ENCODE measurements at regions of chr12 and their contacts with region 1.

Region 1: GRCh38 chr12:105053116-105053572 is 31.1 kb downstream of the ALDH1L2 start:
- DNase-seq: peak; percentile 79
- ATAC-seq: peak; percentile 96
- H3K4me3 ChIP-seq: no peak overlapping the region
- H3K27ac ChIP-seq: no peak overlapping the region
- H3K4me1 ChIP-seq: peaks cover 8% of the 10 kb centered on the region
- H3K27me3 ChIP-seq: no peaks in the 10 kb centered on the region
- CTCF ChIP-seq: peak; percentile 78 to 96 (median 94)
- EP300 ChIP-seq: no peak
- POLR2A ChIP-seq: no peak
- RAD21 ChIP-seq: peak; percentile 99

Region 2: GRCh38 chr12:104201238-104202001 is 851.7 kb before region 1 on chr12:
- CTCF ChIA-PET with region 1: interaction called, 6 read pairs
- POLR2A ChIA-PET with region 1: no interaction called
- RAD21 ChIA-PET with region 1: interaction called, 8 read pairs
- SMC1A ChIA-PET with region 1: interaction called, 3 read pairs
- in situ Hi-C with region 1: no loop called
- intact Hi-C with region 1: loop called (anchors 5 kb)
- DNase-seq: peak; percentile 35
- ATAC-seq: peak; percentile 90
- H3K4me3 ChIP-seq: no peak overlapping the region
- H3K27ac ChIP-seq: no peak overlapping the region
- H3K4me1 ChIP-seq: no peaks in the 10 kb centered on the region
- H3K27me3 ChIP-seq: no peaks in the 10 kb centered on the region
- CTCF ChIP-seq: peak; percentile 80 to 83 (median 83)
- EP300 ChIP-seq: no peak
- POLR2A ChIP-seq: no peak
- RAD21 ChIP-seq: peak; percentile 95

Region 3: GRCh38 chr12:104604070-104604994 is 448.8 kb before region 1 on chr12:
- CTCF ChIA-PET with region 1: no interaction called
- POLR2A ChIA-PET with region 1: no interaction called
- RAD21 ChIA-PET with region 1: no interaction called
- SMC1A ChIA-PET with region 1: no interaction called
- in situ Hi-C with region 1: no loop called
- intact Hi-C with region 1: loop called (anchors 10 kb)
- DNase-seq: peak; percentile 86
- ATAC-seq: peak; percentile 90
- H3K4me3 ChIP-seq: no peak overlapping the region
- H3K27ac ChIP-seq: peak overlapping the region; percentile 87
- H3K4me1 ChIP-seq: peaks cover 34% of the 10 kb centered on the region
- H3K27me3 ChIP-seq: no peaks in the 10 kb centered on the region
- CTCF ChIP-seq: 0 out of 6 replicates have a peak, but pooled peaks of 1 of the 3 experiments have one; percentile 4
- EP300 ChIP-seq: peak; percentile 36 to 60; a peak in 1 of 4 replicates
- POLR2A ChIP-seq: no peak
- RAD21 ChIP-seq: peak; percentile 32

Region 4: DNA sequence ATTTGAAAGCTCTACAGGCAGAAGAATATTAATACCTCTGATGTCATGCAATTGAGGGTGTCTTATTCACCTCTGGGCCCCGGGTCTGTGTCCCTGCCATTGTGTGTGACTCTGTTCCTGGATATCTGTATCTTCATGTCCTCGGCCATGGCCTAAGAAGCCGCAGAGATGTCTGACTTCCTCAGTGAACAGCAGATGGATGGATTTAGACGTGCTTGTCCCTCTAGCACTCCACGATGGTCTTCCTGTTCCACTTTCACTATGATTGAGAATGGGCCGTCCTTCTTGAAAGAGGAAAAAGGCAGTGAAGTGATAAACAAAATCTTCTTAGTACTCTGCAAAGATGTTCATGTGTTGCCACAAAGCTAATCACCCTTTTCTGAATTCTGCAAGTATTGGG is 312.5 kb before region 1 on chr12:
- CTCF ChIA-PET with region 1: interaction called, 3 read pairs
- POLR2A ChIA-PET with region 1: no interaction called
- RAD21 ChIA-PET with region 1: no interaction called
- SMC1A ChIA-PET with region 1: interaction called, 3 read pairs
- in situ Hi-C with region 1: no loop called
- intact Hi-C with region 1: loop called (anchors 5 kb)
- DNase-seq: peak; percentile 87
- ATAC-seq: peak; percentile 87
- H3K4me3 ChIP-seq: peak overlapping the region; percentile 45; the same call in 1 of the 2 replicates
- H3K27ac ChIP-seq: peak overlapping the region; percentile 82
- H3K4me1 ChIP-seq: peaks cover 63% of the 10 kb centered on the region
- H3K27me3 ChIP-seq: no peaks in the 10 kb centered on the region
- CTCF ChIP-seq: no peak
- EP300 ChIP-seq: peak in 1 of 2 experiments; percentile 12; a peak in 1 of 4 replicates
- POLR2A ChIP-seq: peak; percentile 66
- RAD21 ChIP-seq: no peak

Region 5: DNA sequence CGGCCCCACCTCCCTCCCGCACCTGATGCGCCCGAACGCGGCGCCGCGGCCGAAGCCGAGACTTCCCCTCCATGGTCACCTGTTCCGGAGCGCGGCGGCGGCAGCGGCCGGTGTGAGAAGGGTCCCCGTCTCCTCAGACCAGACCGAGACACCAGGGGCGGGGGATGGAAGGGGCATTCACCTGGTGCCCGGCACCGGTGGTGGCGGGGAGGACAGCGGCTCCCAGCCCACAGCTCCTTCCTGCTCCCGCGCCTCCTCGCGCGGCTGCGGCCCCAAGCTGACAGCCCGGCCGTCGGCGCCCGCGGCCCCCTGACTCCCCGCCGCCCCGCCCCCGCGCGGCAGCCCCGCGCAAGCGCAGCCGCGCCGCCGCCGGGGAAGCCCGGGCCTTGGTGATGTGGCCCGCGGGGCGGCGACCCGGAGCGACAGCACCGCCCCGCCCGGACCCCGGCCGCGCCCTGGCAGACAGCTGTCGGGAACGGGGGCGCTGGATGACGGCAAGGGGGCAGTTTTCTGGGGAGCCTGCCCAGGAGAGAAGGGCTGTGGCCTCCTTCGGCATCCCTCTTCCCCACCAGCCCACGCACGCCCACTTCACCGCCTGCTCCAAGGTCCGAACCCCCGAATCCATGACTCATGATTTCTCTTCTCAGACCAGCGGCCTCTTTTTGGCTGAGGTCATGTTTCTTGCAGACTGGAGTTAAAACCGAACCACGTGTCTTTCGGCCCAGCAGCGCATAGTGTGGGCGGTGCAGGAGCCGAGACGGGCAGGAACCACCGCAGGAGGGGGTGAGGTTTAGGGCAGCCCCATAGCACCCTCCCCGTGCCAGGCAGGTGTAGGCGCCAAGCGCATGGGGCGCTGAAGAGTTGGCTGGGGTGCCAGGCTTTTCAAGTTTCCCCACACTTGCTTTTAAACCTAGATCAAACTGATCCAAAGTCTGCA is 94.9 kb before region 1 on chr12 and contains the start of gene SLC41A2:
- CTCF ChIA-PET with region 1: interaction called, 4 read pairs
- POLR2A ChIA-PET with region 1: no interaction called
- RAD21 ChIA-PET with region 1: interaction called, 4 read pairs
- SMC1A ChIA-PET with region 1: interaction called, 14 read pairs
- in situ Hi-C with region 1: no loop called
- intact Hi-C with region 1: no loop called
- DNase-seq: peak; percentile 81
- ATAC-seq: peak; percentile 91
- H3K4me3 ChIP-seq: peak within 1 kb of the TSS; percentile 81
- H3K27ac ChIP-seq: peak within 1 kb of the TSS; percentile 68
- H3K4me1 ChIP-seq: peaks cover 10% of the 10 kb centered on the region
- H3K27me3 ChIP-seq: no peaks in the 10 kb centered on the region
- CTCF ChIP-seq: peak; percentile 22 to 40 (median 32); a peak in 2 of 6 replicates
- EP300 ChIP-seq: 0 out of 4 replicates have a peak, but pooled peaks of 1 of the 2 experiments have one; percentile 26
- POLR2A ChIP-seq: peak; percentile 89
- RAD21 ChIP-seq: peak; percentile 16
- polyA plus RNA-seq, gene SLC41A2: 3.5 to 9.2 TPM

Region 6: GRCh38 chr12:105069936-105070702 is 17.0 kb after region 1 on chr12:
- CTCF ChIA-PET with region 1: interaction called, 10 read pairs
- POLR2A ChIA-PET with region 1: no interaction called
- RAD21 ChIA-PET with region 1: interaction called, 5 read pairs
- SMC1A ChIA-PET with region 1: interaction called, 4 read pairs
- in situ Hi-C with region 1: no loop called
- intact Hi-C with region 1: no loop called
- DNase-seq: no peak
- ATAC-seq: no peak
- H3K4me3 ChIP-seq: no peak overlapping the region
- H3K27ac ChIP-seq: no peak overlapping the region
- H3K4me1 ChIP-seq: no peaks in the 10 kb centered on the region
- H3K27me3 ChIP-seq: no peaks in the 10 kb centered on the region
- CTCF ChIP-seq: no peak
- EP300 ChIP-seq: no peak
- POLR2A ChIP-seq: no peak
- RAD21 ChIP-seq: no peak

Region 7: DNA sequence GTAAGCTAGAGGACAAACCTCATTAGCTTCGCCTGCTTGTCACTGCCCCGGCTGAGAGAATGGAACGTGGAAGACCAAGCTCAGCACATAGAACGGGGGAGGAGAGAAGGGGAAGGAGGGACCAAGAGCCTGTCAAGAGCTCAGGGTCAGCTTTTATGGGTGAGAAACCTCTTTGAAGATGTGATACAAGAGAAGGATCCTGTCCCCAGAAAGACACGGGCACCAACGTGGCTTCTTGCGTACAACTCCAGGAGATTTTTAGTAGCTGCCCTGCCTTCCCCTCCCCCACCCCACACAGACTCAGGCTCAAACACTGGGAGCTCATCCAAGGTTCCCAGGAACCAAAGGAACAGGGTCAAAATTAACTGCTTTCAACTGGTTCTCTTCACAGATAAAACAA is 148.2 kb after region 1 on chr12:
- CTCF ChIA-PET with region 1: no interaction called
- POLR2A ChIA-PET with region 1: no interaction called
- RAD21 ChIA-PET with region 1: no interaction called
- SMC1A ChIA-PET with region 1: no interaction called
- in situ Hi-C with region 1: no loop called
- intact Hi-C with region 1: no loop called
- DNase-seq: no peak
- ATAC-seq: no peak
- H3K4me3 ChIP-seq: no peak overlapping the region
- H3K27ac ChIP-seq: no peak overlapping the region
- H3K4me1 ChIP-seq: no peaks in the 10 kb centered on the region
- H3K27me3 ChIP-seq: no peaks in the 10 kb centered on the region
- CTCF ChIP-seq: no peak
- EP300 ChIP-seq: no peak
- POLR2A ChIP-seq: no peak
- RAD21 ChIP-seq: no peak

Region 8: DNA sequence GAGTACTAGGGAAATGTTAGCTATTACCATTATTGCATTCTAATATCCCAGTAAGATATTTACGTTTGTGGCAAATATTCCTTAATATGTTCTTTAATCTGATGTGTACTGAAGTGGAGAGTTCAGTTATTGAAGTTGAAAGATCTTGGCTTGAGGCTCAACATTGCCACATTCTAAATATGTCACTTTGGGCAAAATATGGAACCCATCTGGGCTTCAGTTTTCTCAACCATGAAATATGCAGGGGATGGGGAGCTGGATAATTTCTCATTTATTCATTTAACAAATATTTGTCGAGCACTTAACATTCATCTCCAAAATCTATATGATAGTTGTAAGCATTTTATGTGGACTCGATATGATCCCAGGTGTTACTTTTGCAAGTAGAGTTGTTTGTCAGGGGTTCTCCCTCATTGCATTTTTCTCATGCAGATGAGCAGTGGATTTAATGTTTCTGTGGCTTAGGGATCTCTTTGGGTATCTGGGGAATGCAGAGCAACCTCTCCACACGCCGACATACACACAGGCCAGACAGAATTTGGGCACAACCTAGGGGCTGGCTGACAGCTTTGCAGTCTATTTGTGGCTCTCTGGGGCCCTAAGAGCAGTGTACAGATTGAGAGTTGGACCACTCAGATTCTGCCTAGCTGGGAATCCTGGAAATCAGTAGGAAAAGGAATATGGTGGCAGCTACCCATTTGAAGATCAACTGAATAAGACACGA is 209.5 kb after region 1 on chr12:
- CTCF ChIA-PET with region 1: no interaction called
- POLR2A ChIA-PET with region 1: no interaction called
- RAD21 ChIA-PET with region 1: no interaction called
- SMC1A ChIA-PET with region 1: no interaction called
- in situ Hi-C with region 1: no loop called
- intact Hi-C with region 1: no loop called
- DNase-seq: no peak
- ATAC-seq: no peak
- H3K4me3 ChIP-seq: no peak overlapping the region
- H3K27ac ChIP-seq: no peak overlapping the region
- H3K4me1 ChIP-seq: no peaks in the 10 kb centered on the region
- H3K27me3 ChIP-seq: no peaks in the 10 kb centered on the region
- CTCF ChIP-seq: no peak
- EP300 ChIP-seq: no peak
- POLR2A ChIP-seq: no peak
- RAD21 ChIP-seq: no peak